OCI-LY7 (cell line): ENCODE measurements at regions of chr14 and their contacts with region 1.

Region 1: DNA sequence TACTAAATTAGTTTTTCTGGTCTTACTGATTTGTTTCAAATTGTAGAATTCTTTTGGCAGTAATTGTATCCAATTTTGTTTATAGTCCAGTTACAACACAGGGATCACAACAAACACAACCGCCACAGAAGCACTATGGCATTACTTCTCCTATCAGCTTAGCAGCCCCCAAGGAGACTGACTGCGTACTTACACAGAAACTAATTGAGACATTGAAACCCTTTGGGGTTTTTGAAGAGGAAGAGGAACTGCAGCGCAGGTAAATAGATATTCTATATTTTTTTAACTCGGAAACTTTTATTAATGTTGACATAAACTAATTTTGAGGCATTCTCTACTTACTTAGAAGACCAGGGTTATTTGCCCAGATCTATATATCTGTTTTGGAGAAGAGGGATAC is 17.8 kb downstream of the PAPOLA start:
- DNase-seq: no peak
- H3K4me3 ChIP-seq: no peak overlapping the region
- H3K27ac ChIP-seq: no peak overlapping the region
- H3K4me1 ChIP-seq: peaks cover 26% of the 10 kb centered on the region
- CTCF ChIP-seq: no peak

Region 2: GRCh38 chr14:96320605-96321004 is 199.4 kb before region 1 on chr14:
- CTCF ChIA-PET with region 1: no interaction called
- POLR2A ChIA-PET with region 1: interaction called, 11 read pairs
- intact Hi-C with region 1: no loop called
- DNase-seq: no peak
- H3K4me3 ChIP-seq: no peak overlapping the region
- H3K27ac ChIP-seq: no peak overlapping the region
- H3K4me1 ChIP-seq: no peaks in the 10 kb centered on the region
- CTCF ChIP-seq: no peak

Region 3: DNA sequence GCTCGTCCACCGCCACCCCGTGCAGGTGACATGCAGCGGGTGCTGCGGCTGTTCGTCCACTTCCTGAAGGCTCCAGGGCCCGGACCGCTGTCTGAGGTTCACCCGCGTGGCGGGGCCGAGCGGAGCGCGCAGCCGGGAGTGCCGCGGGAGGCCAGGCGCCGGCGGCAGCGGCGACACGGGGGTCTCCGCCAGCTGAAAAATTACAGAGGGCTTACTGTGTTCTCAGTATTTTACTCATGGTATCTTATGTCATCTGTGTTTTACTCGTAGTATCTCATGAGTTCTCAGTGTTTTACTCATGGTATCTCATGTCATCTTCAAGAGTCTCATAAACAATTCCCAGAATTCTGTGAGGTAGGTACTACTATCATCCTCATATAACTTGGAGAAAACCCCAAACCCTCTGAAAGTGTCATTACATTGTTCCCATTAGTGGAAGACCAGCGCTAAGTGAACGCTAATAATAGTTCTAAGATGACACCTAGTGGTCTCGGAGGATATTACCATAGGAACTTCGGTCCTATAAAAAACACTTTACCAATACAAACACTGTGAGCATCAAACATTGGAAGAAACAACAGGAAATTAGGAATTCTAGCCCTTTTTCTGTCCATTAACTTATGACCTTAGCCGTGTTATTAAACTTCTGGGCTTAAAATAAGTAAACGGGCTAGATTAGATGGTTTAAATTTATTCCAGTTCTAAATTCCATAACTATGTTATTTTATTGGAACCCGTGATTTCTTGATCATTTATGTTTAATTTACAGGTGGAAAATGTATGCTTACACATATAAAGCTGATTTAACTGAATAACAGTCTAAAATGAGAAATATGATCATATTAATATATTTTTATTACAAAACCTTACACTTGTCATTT is 95.6 kb before region 1 on chr14:
- CTCF ChIA-PET with region 1: no interaction called
- POLR2A ChIA-PET with region 1: no interaction called
- intact Hi-C with region 1: no loop called
- DNase-seq: peak; percentile 78
- H3K4me3 ChIP-seq: peak overlapping the region; percentile 35
- H3K27ac ChIP-seq: no peak overlapping the region
- H3K4me1 ChIP-seq: peaks cover 5% of the 10 kb centered on the region
- CTCF ChIP-seq: peak; percentile 97